Mammary epithelial cell (primary cell): ENCODE measurements at regions of chr5 and their contacts with region 1.

Region 1: DNA sequence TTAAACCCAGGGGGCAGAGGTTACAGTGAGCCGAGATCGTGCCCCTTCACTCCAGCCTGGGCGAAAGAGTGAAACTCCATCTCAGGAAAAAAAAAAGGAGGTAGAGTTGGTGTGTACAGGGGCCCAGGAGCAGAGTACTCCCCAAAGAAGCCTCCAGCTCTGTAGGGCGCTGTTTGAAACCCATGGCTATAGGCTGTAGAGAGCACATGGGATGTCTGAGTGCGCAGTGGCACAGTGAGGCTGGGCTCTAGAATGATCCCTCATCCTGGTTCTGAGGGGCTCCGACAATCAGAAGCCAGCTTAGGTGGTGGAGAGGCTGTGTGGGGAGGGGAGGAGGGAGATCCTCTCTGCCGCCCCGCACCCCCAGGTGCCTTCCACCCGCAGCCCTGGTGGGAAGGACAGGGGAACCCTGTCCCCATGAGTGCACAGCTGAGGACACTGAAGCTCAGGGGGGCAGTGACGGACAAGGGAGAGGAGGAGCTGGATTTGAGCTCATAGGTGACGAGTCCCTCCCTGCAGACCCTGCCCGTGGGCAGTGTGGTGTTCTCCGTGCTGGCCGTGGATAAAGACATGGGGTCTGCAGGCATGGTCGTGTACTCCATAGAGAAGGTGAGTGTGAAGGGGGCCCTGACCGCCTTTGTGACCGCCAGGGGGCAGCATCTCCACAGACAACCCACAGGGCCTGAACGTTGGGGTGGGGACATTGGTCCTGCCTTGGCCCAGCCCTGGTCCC is 24.6 kb downstream of the CDHR2 start:
- DNase-seq: peak; percentile 20
- H3K4me3 ChIP-seq: no peak overlapping the region
- H3K27ac ChIP-seq: no peak overlapping the region
- H3K4me1 ChIP-seq: peaks cover 6% of the 10 kb centered on the region
- H3K27me3 ChIP-seq: no peaks in the 10 kb centered on the region
- CTCF ChIP-seq: peak; percentile 69 to 83

Region 2: DNA sequence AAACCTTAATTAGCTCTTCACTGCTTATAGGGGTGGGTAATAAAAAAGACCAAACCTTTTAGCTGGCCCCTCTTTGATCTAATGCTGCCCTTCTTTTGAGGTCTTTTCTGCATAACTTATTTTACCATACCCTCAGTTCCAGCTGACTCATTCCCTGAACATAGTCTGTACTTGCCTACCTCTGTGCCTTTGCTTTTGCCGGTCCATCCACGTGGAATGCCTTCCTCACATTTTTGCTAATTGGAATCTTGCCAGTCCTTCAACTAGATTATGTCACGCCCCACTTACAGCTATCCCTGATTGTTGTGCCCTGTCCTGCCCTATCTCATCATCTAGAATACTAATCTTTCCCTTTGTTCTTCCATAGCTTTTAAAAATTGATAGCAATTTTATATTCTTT is 81.3 kb before region 1 on chr5:
- CTCF ChIA-PET with region 1: no interaction called
- dilution Hi-C with region 1: no loop called
- in situ Hi-C with region 1: no loop called
- intact Hi-C with region 1: no loop called
- DNase-seq: peak; percentile 88
- H3K4me3 ChIP-seq: no peak overlapping the region
- H3K27ac ChIP-seq: peak overlapping the region; percentile 18
- H3K4me1 ChIP-seq: peaks cover 26% of the 10 kb centered on the region
- H3K27me3 ChIP-seq: no peaks in the 10 kb centered on the region
- CTCF ChIP-seq: no peak

Region 3: DNA sequence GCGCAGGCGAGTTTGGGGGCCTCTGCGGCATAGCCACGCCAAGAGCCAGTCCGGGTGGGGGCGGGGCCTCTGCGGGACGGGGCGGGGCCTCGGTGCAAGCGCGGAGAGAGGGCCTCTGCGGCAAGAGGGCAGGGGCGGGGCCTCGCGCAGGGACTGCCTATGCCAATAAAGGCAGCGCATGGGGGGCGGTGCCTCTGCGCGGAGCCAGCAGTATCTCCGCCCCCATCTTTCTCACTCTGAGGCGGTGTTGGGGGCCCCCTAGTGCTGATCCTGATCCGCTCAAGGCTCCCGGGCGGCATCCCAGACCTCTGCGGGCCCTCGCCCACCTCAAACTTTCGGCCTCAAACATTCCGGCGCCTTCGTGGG is 45.5 kb after region 1 on chr5:
- CTCF ChIA-PET with region 1: no interaction called
- dilution Hi-C with region 1: no loop called
- in situ Hi-C with region 1: no loop called
- intact Hi-C with region 1: loop called (anchors 1 kb)
- DNase-seq: peak; percentile 71
- H3K4me3 ChIP-seq: no peak overlapping the region
- H3K27ac ChIP-seq: no peak overlapping the region
- H3K4me1 ChIP-seq: peaks cover 20% of the 10 kb centered on the region
- H3K27me3 ChIP-seq: peaks cover 15% of the 10 kb centered on the region
- CTCF ChIP-seq: peak in 1 of 2 donors; percentile 25

Region 4: GRCh38 chr5:176647030-176647866 is 73.5 kb after region 1 on chr5 and contains the start of gene TSPAN17:
- CTCF ChIA-PET with region 1: no interaction called
- dilution Hi-C with region 1: no loop called
- in situ Hi-C with region 1: no loop called
- intact Hi-C with region 1: loop called (anchors 1 kb)
- DNase-seq: peak; percentile 98
- H3K4me3 ChIP-seq: peak within 1 kb of the TSS; percentile 65 to 72 (median 70)
- H3K27ac ChIP-seq: peak within 1 kb of the TSS; percentile 37
- H3K4me1 ChIP-seq: peaks cover 13% of the 10 kb centered on the region
- H3K27me3 ChIP-seq: no peaks in the 10 kb centered on the region
- CTCF ChIP-seq: peak in 1 of 2 donors; percentile 51
- total RNA-seq, gene TSPAN17: 47.4 to 48.8 TPM